ENCODE measurements at regions of chr2 and their contacts with region 1.

Region 1: GRCh38 chr2:73907840-73908452 is 15.1 kb downstream of the ACTG2 start:
- DNase-seq: peak; percentile 58
- ATAC-seq: peak; percentile 100
- H3K4me3 Mint-ChIP-seq: no peak overlapping the region
- H3K27ac Mint-ChIP-seq: no peak overlapping the region
- H3K4me1 Mint-ChIP-seq: peaks cover 4% of the 10 kb centered on the region
- H3K27me3 Mint-ChIP-seq: no peaks in the 10 kb centered on the region
- CTCF ChIP-seq: no peak

Region 2: GRCh38 chr2:73892631-73893329 is 15.2 kb before region 1 on chr2 and contains the start of gene ACTG2:
- CTCF ChIA-PET with region 1: interaction called, 14 read pairs
- POLR2A ChIA-PET with region 1: no interaction called
- DNase-seq: no peak
- ATAC-seq: peak; percentile 43
- H3K4me3 Mint-ChIP-seq: no peak within 1 kb of the TSS
- H3K27ac Mint-ChIP-seq: no peak within 1 kb of the TSS
- H3K4me1 Mint-ChIP-seq: no peaks in the 10 kb centered on the region
- H3K27me3 Mint-ChIP-seq: no peaks in the 10 kb centered on the region; the same call in 1 of the 2 replicates
- CTCF ChIP-seq: no peak
- total RNA-seq, gene ACTG2: 1.4 to 2.7 TPM (median 1.8 TPM) in 3 replicates

Region 3: GRCh38 chr2:73920577-73921545 is 12.9 kb after region 1 on chr2:
- CTCF ChIA-PET with region 1: interaction called, 19 read pairs
- POLR2A ChIA-PET with region 1: no interaction called
- DNase-seq: peak; percentile 85
- ATAC-seq: peak; percentile 99
- H3K4me3 Mint-ChIP-seq: peak overlapping the region; percentile 39
- H3K27ac Mint-ChIP-seq: no peak overlapping the region
- H3K4me1 Mint-ChIP-seq: peaks cover 7% of the 10 kb centered on the region
- H3K27me3 Mint-ChIP-seq: peaks cover 23% of the 10 kb centered on the region
- CTCF ChIP-seq: no peak

Region 4: DNA sequence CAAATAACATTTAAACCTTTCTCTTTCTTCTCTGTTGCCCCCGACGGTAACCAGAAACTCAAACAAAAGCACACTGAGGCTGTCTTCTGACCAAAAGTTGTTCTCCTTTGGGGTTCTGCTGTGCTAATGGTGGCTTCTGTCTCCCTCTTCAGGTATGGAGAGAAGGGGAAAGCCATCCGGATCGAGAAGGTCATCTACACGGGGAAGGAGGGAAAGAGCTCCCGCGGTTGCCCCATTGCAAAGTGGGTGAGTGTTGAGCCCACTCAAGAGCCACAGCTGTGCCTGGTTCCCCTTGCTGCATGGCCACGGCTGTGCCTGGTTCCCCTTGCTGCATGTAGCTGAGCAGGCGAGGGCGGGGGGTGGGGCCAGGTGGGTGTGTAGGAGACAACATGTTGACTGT is 172.4 kb after region 1 on chr2:
- CTCF ChIA-PET with region 1: interaction called, 14 read pairs
- POLR2A ChIA-PET with region 1: no interaction called
- DNase-seq: no peak
- ATAC-seq: peak; percentile 64
- H3K4me3 Mint-ChIP-seq: no peak overlapping the region
- H3K27ac Mint-ChIP-seq: peak overlapping the region; percentile 69; the same call in 1 of the 2 replicates
- H3K4me1 Mint-ChIP-seq: no peaks in the 10 kb centered on the region
- H3K27me3 Mint-ChIP-seq: no peaks in the 10 kb centered on the region
- CTCF ChIP-seq: no peak

Region 5: DNA sequence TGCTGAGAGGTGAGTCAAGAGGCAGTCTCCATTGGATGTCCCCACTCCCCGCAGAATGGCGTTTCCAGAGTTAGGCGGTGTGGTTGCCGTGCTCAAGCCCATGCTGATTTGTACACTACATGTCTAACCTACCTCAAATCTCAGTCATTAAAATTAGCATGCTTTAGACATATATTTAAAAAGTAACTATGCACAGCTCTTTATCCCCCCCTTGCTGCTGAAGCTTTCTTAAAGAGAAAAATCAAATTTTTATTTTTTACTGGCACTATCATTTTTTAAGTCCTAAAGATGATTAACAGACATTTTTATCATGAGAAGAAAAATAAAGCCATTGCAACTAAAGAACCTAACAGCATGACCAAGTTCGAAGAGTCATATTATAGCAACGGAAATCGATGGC is 196.9 kb after region 1 on chr2:
- CTCF ChIA-PET with region 1: interaction called, 13 read pairs
- POLR2A ChIA-PET with region 1: no interaction called
- DNase-seq: no peak
- ATAC-seq: no peak
- H3K4me3 Mint-ChIP-seq: no peak overlapping the region
- H3K27ac Mint-ChIP-seq: no peak overlapping the region
- H3K4me1 Mint-ChIP-seq: peaks cover 27% of the 10 kb centered on the region
- H3K27me3 Mint-ChIP-seq: no peaks in the 10 kb centered on the region
- CTCF ChIP-seq: no peak

Region 6: DNA sequence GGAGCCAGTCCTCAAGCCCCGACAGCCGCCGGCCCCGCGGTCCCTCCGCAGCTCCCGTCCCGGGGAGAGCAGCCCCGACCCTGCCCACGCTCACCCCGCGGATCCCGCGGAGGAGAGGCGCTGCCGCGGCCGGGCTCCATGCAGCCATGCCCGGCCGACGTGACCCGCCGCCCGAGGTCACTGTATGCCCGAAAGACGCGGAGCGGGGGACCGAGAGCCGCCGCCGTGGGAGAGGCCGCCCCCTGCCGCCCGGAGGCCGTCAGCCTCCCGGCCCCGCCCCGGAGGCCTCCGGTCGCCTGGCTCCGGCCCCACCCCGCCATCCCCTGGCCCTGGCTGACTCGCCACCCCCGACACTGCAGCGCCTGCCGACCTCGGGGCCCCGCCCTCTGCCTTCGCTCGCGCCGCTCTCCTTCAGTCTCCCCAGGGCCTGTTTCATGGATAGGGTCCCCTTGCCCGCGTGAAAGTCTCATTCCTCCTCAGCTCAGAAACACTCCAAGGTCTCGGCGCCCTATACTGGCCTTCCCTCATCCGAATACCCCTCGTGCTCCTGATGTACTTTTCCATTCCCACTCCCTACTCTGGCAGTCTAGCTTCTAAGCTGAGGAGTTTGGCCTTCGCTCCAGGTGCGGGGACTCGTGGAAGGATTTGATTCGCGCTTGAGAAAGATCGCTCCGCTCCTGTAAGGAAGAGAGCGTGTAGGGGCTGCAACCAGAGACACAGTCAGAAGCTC is 239.9 kb after region 1 on chr2 and contains the start of gene BOLA3:
- CTCF ChIA-PET with region 1: interaction called, 23 read pairs
- POLR2A ChIA-PET with region 1: no interaction called
- DNase-seq: peak; percentile 92
- ATAC-seq: peak; percentile 93
- H3K4me3 Mint-ChIP-seq: no peak within 1 kb of the TSS
- H3K27ac Mint-ChIP-seq: no peak within 1 kb of the TSS
- H3K4me1 Mint-ChIP-seq: peaks cover 9% of the 10 kb centered on the region; the same call in 1 of the 2 replicates
- H3K27me3 Mint-ChIP-seq: no peaks in the 10 kb centered on the region
- CTCF ChIP-seq: peak; percentile 41; the same call in 1 of the 2 replicates
- total RNA-seq, gene BOLA3: 58.2 to 66.1 TPM (median 65.8 TPM) in 3 replicates

Measured in WTC11 (cell line).